WTC11 (cell line): ENCODE measurements at regions of chr6 and their contacts with region 1.

Region 1: DNA sequence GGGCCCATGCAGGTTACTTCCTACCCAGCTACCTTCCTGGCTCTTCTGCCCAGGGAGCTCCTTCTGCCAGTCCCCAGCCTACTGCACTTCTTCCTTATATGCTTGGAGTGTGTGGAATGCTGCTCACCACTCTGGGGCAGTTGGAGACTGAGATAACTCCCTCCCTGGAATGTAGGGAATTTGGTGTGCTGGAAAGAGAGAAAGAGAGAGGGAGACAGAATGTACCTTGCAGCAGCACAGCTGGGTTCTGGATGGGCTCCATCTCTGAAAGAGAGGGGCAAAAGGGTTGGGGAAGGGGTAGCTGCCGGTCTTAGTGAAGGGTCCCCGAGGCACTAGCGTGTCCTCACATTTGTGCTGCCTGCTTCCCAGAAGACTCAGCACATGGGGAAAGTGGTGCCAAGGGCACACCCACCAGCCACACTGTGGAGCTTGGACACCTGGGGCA is 40.2 kb upstream of the DDR1 start:
- DNase-seq: peak; percentile 38
- ATAC-seq: peak; percentile 66
- H3K4me3 Mint-ChIP-seq: no peak overlapping the region
- H3K27ac Mint-ChIP-seq: peak overlapping the region; percentile 91
- H3K4me1 Mint-ChIP-seq: peaks cover 84% of the 10 kb centered on the region
- H3K27me3 Mint-ChIP-seq: no peaks in the 10 kb centered on the region
- CTCF ChIP-seq: no peak

Region 2: DNA sequence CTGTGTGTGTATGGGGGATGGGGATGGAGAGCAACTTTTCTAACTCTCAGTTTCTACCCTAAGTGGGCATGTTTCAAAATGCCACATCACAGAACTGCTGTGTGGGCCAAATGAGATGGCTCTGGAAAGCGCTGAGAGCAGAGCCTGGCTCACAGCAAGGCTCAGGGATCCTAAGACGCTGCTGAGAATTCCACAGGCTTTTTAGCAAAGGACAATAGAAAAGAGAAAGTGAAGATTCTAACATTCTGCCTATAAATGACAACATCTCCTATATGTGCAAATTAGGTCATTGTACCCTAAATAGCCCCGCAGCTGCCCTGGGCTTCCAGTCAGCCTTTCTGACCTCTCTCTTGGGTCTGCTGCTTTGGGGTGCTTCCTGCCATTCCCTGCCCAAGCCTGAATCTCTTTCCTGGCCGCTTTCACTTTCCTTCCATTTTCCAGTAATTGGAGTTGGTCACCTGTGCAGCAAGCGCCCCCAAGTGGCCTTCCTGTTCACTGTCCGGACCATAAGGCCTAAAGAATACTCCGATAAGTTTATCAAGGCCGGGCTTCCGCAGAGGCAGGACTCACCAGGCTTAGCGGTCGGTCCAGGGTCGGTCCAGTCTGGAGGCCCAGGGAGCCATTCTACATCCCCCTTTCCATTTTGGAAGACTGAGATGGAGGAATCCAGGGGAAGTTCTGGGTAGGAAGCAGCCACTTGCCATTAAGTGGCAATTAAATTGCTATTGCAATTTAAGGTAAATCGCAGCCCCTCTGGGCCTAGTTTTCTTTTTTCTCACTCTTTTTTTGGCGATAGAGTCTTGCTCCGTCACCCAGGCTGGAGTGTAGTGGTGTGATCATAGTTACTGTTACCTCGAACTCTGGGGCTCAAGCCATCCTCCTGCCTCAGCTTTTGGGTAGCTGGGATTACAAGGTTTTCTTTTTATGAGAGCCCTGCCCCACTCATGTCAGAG is 33.6 kb after region 1 on chr6:
- CTCF ChIA-PET with region 1: interaction called, 18 read pairs
- POLR2A ChIA-PET with region 1: interaction called, 25 read pairs
- DNase-seq: peak; percentile 89
- ATAC-seq: peak; percentile 54
- H3K4me3 Mint-ChIP-seq: no peak overlapping the region
- H3K27ac Mint-ChIP-seq: peak overlapping the region; percentile 89
- H3K4me1 Mint-ChIP-seq: peaks cover 62% of the 10 kb centered on the region
- H3K27me3 Mint-ChIP-seq: no peaks in the 10 kb centered on the region
- CTCF ChIP-seq: peak; percentile 75

Region 3: DNA sequence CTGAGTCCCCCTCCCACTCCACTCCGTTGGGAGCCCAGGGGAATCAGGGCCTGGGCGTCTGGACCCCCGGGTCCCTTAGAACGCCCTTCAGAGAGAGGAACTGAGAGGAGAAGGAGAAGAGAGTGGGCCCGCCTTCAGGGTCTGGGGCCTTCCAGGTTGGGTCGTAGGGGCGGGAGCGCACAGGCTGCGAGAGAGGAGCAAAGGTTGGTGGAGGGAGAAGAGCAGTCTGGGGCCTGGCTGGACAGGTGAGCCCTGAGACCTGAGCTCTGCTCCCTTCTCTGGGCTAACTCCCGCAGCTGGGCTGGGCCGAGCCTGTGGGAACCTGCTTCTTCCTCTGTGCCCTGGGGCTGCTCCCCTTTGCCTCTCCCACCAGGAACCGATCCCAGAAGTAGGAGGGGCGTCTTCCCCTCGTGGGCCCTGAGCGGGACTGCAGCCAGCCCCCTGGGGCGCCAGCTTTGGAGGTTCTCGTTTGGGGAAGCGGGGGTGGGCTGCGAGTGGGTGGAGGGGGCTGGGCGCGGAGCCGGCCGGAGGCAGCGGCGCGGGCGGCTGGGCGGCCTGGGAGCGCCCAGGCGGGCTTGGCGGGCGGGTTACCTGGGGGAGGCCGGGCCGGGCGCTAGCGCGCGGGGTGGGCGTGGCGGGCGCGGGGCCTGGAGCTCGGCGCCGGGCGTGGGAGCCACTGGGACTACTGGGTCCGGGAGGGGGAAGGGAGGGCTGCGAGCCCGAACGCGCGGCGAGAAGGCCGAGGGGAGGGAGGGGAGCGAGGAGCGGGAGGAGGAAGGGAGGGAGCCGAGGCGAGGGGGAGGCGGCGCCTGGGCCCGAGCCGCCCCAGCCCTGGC is 39.8 kb after region 1 on chr6 and contains the start of gene DDR1:
- CTCF ChIA-PET with region 1: interaction called, 18 read pairs
- POLR2A ChIA-PET with region 1: interaction called, 25 read pairs
- DNase-seq: peak; percentile 58
- ATAC-seq: peak; percentile 4
- H3K4me3 Mint-ChIP-seq: peak within 1 kb of the TSS; percentile 93
- H3K27ac Mint-ChIP-seq: peak within 1 kb of the TSS; percentile 99
- H3K4me1 Mint-ChIP-seq: peaks cover 71% of the 10 kb centered on the region
- H3K27me3 Mint-ChIP-seq: no peaks in the 10 kb centered on the region
- CTCF ChIP-seq: no peak
- total RNA-seq, gene DDR1: 195 to 230 TPM (median 203 TPM) in 3 replicates